Common myeloid progenitor, CD34-positive (primary cell): ENCODE measurements at regions of chr1 and their contacts with region 1.

Region 1: DNA sequence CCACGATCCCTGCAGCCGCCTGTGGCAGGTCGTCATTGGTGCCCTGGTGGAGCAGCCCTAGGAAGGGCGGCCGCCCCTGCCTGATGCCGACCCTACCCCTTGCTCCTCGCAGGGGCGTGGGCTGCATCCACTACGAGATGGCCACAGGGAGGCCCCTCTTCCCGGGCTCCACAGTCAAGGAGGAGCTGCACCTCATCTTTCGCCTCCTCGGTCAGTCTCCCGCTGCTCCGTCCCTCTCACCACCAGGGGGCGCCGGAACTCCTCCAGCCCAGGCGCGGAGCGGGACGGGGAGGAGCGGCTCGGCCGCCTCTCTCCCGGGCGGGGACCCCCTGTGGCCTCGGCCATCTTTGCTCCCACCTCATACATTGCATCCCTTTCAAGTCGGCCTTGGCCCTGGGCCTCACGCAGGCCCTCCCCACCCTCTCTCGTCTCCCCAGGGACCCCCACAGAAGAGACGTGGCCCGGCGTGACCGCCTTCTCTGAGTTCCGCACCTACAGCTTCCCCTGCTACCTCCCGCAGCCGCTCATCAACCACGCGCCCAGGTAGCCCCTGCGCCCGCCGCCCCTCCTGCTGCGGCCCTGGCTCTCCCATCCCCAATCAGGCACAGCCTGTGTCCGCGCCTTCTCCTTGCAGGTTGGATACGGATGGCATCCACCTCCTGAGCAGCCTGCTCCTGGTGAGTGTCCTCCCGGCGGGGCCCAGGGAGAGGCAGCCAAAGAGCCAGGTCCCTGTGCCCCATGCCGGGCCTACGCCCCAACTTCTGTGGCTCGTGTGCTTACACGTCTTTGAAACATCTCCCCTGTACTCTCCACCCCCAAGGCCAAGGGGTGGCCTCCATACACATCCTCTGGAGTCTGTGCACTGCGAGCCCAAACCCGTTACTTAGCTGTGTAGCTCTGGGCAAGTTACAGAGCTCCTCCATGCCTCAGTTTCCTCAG is 24.7 kb downstream of the CDK18 start:
- DNase-seq: peak; percentile 71 to 76 (median 74)
- H3K4me3 ChIP-seq: peak overlapping the region in 4 of 7 experiments; percentile 32 to 70 (median 44)
- H3K27ac ChIP-seq: no peak overlapping the region
- H3K4me1 ChIP-seq: peaks cover 0 to 5% (median 1%) of the 10 kb centered on the region in 4 experiments
- H3K27me3 ChIP-seq: no peaks in the 10 kb centered on the region

Region 2: GRCh38 chr1:205543411-205544301 is 14.5 kb after region 1 on chr1:
- CTCF ChIA-PET with region 1: interaction called, 41 read pairs
- POLR2A ChIA-PET with region 1: interaction called, 5 read pairs
- DNase-seq: peak; percentile 68 to 91 (median 87)
- H3K4me3 ChIP-seq: peak overlapping the region in 4 of 7 experiments; percentile 19 to 67 (median 42)
- H3K27ac ChIP-seq: no peak overlapping the region
- H3K4me1 ChIP-seq: peaks cover 0 to 10% (median 5%) of the 10 kb centered on the region in 4 experiments
- H3K27me3 ChIP-seq: peaks cover 0 to 31% (median 21%) of the 10 kb centered on the region in 5 experiments

Region 3: DNA sequence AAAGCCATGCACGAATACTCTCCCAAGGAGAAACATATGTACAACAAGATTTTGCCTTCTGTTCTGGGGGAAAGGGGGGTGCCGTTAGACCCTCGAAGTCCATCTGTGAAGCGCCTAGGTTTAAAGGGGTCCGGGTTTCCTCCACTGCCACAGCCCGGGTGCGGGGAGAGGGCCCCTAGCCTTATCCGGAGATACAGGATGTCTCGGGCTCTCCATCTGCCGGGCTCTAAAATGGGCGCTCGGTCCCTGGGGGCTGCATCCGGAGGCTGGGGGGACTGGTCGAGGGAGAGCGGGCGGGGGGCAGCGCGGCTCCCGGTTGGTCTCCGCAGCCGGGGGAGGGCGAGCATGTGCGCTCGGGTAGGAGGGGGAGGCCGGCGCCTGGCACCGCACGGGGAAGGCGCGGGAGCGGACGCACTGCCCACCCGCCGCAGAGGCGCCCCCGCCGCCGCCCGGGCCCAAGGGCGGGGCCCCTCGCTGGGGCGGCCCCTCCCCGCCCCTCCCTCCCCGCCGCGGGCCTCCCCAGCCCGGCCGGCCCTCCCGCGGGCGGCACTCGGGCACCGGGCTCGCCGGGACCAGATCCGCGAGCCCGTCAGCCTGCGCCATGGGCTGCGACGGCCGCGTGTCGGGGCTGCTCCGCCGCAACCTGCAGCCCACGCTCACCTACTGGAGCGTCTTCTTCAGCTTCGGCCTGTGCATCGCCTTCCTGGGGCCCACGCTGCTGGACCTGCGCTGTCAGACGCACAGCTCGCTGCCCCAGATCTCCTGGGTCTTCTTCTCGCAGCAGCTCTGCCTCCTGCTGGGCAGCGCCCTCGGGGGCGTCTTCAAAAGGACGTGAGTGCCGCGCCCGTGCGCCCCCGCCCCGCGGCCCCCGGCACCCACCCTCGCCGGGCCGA is 39.6 kb after region 1 on chr1:
- CTCF ChIA-PET with region 1: interaction called, 15 read pairs
- POLR2A ChIA-PET with region 1: no interaction called
- DNase-seq: peak in 2 of 3 donors; percentile 37 to 51
- H3K4me3 ChIP-seq: peak overlapping the region in 4 of 7 experiments; percentile 19 to 58 (median 29)
- H3K27ac ChIP-seq: no peak overlapping the region
- H3K4me1 ChIP-seq: peaks cover 0 to 9% (median 4%) of the 10 kb centered on the region in 4 experiments
- H3K27me3 ChIP-seq: peaks cover 2 to 64% (median 46%) of the 10 kb centered on the region in 5 experiments

Region 4: GRCh38 chr1:205584732-205585131 is 55.6 kb after region 1 on chr1:
- CTCF ChIA-PET with region 1: interaction called, 16 read pairs
- POLR2A ChIA-PET with region 1: no interaction called
- DNase-seq: no peak
- H3K4me3 ChIP-seq: no peak overlapping the region
- H3K27ac ChIP-seq: no peak overlapping the region
- H3K4me1 ChIP-seq: peaks cover 0 to 30% (median 24%) of the 10 kb centered on the region in 4 experiments
- H3K27me3 ChIP-seq: no peaks in the 10 kb centered on the region

Region 5: GRCh38 chr1:205631727-205632373 is 102.7 kb after region 1 on chr1 and contains the start of gene ELK4:
- CTCF ChIA-PET with region 1: interaction called, 17 read pairs
- POLR2A ChIA-PET with region 1: no interaction called
- DNase-seq: peak; percentile 99 to 100 (median 99)
- H3K4me3 ChIP-seq: peak within 1 kb of the TSS; percentile 67 to 95 (median 90)
- H3K27ac ChIP-seq: peak within 1 kb of the TSS; percentile 80 to 92
- H3K4me1 ChIP-seq: peaks cover 8 to 26% (median 21%) of the 10 kb centered on the region in 4 experiments
- H3K27me3 ChIP-seq: no peaks in the 10 kb centered on the region